ENCODE measurements at regions of chr6 and their contacts with region 1.

Region 1: GRCh38 chr6:35342258-35343091 is at the start of gene PPARD:
- DNase-seq: peak; percentile 91 to 99
- H3K4me3 ChIP-seq: peak within 1 kb of the TSS; percentile 82 to 90
- H3K27ac ChIP-seq: peak within 1 kb of the TSS; percentile 89 to 93
- H3K4me1 ChIP-seq: peaks cover 0 to 11% of the 10 kb centered on the region in 2 donors
- H3K27me3 ChIP-seq: no peaks in the 10 kb centered on the region
- CTCF ChIP-seq: peak; percentile 98 to 99 (median 99)
- total RNA-seq, gene PPARD: 21.1 TPM

Region 2: DNA sequence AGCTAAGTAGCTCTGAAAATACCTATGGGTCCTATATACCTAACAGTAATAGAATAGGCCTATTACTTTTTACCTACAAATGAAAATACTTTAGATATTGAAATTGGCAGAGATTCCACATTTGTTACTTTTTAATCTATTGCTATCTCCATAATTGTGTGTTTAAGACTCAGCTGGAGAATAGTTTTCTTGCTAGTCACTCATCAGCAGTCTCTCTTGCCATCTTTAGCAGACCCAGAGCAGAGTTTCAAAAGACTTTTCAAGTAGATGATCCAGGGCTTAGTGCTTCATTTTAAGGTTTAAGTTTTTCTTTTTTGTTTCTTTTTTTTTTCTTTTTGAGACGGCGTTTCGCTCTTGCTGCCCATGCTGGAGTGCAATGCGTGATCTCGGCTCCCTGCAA is 440.5 kb before region 1 on chr6:
- intact Hi-C with region 1: no loop called
- DNase-seq: no peak
- H3K4me3 ChIP-seq: no peak overlapping the region
- H3K27ac ChIP-seq: no peak overlapping the region
- H3K4me1 ChIP-seq: no peaks in the 10 kb centered on the region
- H3K27me3 ChIP-seq: no peaks in the 10 kb centered on the region
- CTCF ChIP-seq: no peak

Region 3: GRCh38 chr6:35368038-35368887 is 25.8 kb after region 1 on chr6:
- intact Hi-C with region 1: loop called (anchors 2 kb)
- DNase-seq: no peak
- H3K4me3 ChIP-seq: no peak overlapping the region
- H3K27ac ChIP-seq: peak overlapping the region in 1 of 2 donors; percentile 29
- H3K4me1 ChIP-seq: peaks cover 5 to 16% of the 10 kb centered on the region in 2 donors
- H3K27me3 ChIP-seq: no peaks in the 10 kb centered on the region
- CTCF ChIP-seq: no peak

Region 4: GRCh38 chr6:35415065-35415991 is 72.9 kb after region 1 on chr6:
- intact Hi-C with region 1: loop called (anchors 1 kb)
- DNase-seq: peak in 1 of 2 donors; percentile 79
- H3K4me3 ChIP-seq: no peak overlapping the region
- H3K27ac ChIP-seq: no peak overlapping the region
- H3K4me1 ChIP-seq: no peaks in the 10 kb centered on the region
- H3K27me3 ChIP-seq: no peaks in the 10 kb centered on the region
- CTCF ChIP-seq: peak; percentile 37 to 63 (median 53)

Region 5: DNA sequence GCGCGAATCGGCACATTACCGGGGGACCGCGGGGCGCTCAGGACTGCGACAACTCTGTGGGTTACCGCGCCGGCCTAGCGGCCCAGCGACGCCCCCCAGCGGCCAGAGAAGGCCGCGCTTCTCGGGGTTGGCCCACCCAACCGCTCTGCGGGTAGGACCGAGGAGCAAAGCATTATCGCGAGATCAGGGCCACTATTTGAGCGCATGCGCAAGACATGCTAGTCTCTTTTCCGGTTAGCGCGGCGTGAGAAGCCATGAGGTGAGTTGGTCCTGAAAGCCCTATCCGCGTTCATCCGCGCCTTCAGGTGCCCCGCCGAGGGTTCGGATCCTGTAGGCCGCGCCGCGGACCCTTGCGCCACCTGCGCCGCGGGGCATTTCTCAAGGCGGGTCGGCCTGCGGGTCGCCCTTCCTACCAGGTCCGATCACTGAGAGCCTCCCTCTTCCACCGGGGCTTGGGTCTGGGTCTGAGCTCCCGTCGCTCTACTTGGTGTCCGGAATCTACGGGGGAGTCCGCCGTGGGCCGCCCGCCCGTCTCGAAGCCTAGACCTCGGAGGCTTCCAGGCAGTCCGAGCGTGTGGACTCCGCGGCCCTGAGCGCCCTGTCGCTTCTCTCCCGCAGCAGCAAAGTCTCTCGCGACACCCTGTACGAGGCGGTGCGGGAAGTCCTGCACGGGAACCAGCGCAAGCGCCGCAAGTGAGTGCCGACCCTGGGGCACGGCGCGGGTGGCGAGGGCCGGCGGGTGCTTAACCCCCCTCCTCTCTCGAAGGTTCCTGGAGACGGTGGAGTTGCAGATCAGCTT is 125.9 kb after region 1 on chr6 and contains the start of gene RPL10A:
- intact Hi-C with region 1: loop called (anchors 1 kb)
- DNase-seq: peak; percentile 82 to 97
- H3K4me3 ChIP-seq: peak within 1 kb of the TSS; percentile 72 to 78
- H3K27ac ChIP-seq: peak within 1 kb of the TSS; percentile 84 to 88
- H3K4me1 ChIP-seq: peaks cover 5 to 19% of the 10 kb centered on the region in 2 donors
- H3K27me3 ChIP-seq: no peaks in the 10 kb centered on the region
- CTCF ChIP-seq: peak; percentile 97 to 98 (median 98)
- total RNA-seq, gene RPL10A: 643 TPM